GM12878 (cell line): ENCODE measurements at regions of chr13 and their contacts with region 1.

Region 1: GRCh38 chr13:98322091-98322718 is 145.1 kb upstream of the RNF113B start:
- DNase-seq: no peak
- ATAC-seq: no peak
- H3K4me3 ChIP-seq: no peak overlapping the region
- H3K27ac ChIP-seq: no peak overlapping the region
- H3K4me1 ChIP-seq: no peaks in the 10 kb centered on the region
- H3K27me3 ChIP-seq: no peaks in the 10 kb centered on the region
- CTCF ChIP-seq: no peak
- EP300 ChIP-seq: no peak
- POLR2A ChIP-seq: no peak
- RAD21 ChIP-seq: no peak

Region 2: GRCh38 chr13:98222081-98222554 is 100.1 kb before region 1 on chr13:
- CTCF ChIA-PET with region 1: no interaction called
- POLR2A ChIA-PET with region 1: no interaction called
- RAD21 ChIA-PET with region 1: no interaction called
- SMC1A ChIA-PET with region 1: no interaction called
- in situ Hi-C with region 1: no loop called
- intact Hi-C with region 1: no loop called
- DNase-seq: no peak
- ATAC-seq: no peak
- H3K4me3 ChIP-seq: no peak overlapping the region
- H3K27ac ChIP-seq: no peak overlapping the region
- H3K4me1 ChIP-seq: no peaks in the 10 kb centered on the region
- H3K27me3 ChIP-seq: no peaks in the 10 kb centered on the region
- CTCF ChIP-seq: no peak
- EP300 ChIP-seq: no peak
- POLR2A ChIP-seq: no peak
- RAD21 ChIP-seq: no peak

Region 3: GRCh38 chr13:98333486-98333885 is 11.3 kb after region 1 on chr13:
- CTCF ChIA-PET with region 1: interaction called, 13 read pairs
- POLR2A ChIA-PET with region 1: no interaction called
- RAD21 ChIA-PET with region 1: no interaction called
- SMC1A ChIA-PET with region 1: interaction called, 6 read pairs
- in situ Hi-C with region 1: no loop called
- intact Hi-C with region 1: no loop called
- DNase-seq: no peak
- ATAC-seq: no peak
- H3K4me3 ChIP-seq: no peak overlapping the region
- H3K27ac ChIP-seq: no peak overlapping the region
- H3K4me1 ChIP-seq: no peaks in the 10 kb centered on the region
- H3K27me3 ChIP-seq: no peaks in the 10 kb centered on the region
- CTCF ChIP-seq: no peak
- EP300 ChIP-seq: no peak
- POLR2A ChIP-seq: no peak
- RAD21 ChIP-seq: no peak